ENCODE measurements at regions of chr9 and their contacts with region 1.

Region 1: DNA sequence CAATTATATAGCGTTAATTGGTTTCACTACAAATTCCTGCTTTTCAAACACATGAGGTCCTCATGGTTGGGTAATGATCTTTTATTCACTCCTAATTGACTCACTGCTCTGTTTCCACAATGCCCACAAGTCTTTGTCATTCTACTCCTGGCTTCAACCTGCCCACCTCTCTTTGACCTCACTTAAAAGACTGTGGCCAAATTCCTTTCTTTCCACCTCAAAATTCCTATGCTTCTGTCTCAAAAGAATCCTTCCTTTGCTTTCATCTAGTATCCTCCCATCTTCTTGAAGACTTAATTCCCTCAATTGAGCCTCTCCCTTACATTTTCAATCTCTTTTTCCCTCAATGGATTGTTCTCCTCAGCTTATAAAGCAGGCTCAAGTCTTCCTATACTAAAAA is 4.9 kb downstream of the APBA1 start:
- DNase-seq: no peak
- ATAC-seq: no peak
- H3K4me3 ChIP-seq: no peak overlapping the region
- H3K27ac ChIP-seq: no peak overlapping the region
- H3K4me1 ChIP-seq: no peaks in the 10 kb centered on the region
- H3K27me3 ChIP-seq: no peaks in the 10 kb centered on the region
- CTCF ChIP-seq: no peak

Region 2: DNA sequence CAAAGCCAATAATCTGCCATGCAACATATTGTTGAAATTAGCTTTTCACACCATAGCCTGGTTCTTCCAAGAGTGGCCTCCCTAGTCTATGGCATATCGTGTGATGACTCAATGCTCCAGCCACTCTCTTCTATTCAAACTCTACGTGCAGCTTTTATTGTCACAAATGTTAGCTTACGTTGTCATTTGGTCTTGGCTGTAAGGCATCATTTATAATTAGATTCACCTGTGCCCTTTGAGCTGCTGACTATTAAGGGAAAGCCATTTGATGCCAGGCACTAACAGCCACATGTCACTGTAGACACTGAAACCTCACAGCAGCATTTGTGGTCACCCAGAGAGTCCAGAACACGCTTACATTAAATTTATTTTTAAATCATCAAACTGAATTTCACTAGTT is 61.9 kb before region 1 on chr9:
- intact Hi-C with region 1: loop called in 1 of 2 experiments (anchors 10 kb)
- DNase-seq: no peak
- ATAC-seq: peak in 3 of 4 donors; percentile 95 to 98 (median 96)
- H3K4me3 ChIP-seq: no peak overlapping the region
- H3K27ac ChIP-seq: peak overlapping the region; percentile 46
- H3K4me1 ChIP-seq: peaks cover 9% of the 10 kb centered on the region
- H3K27me3 ChIP-seq: no peaks in the 10 kb centered on the region
- CTCF ChIP-seq: no peak

Measured in psoas muscle (tissue), 8 donors.